ENCODE measurements at regions of chr20 and their contacts with region 1.

Region 1: DNA sequence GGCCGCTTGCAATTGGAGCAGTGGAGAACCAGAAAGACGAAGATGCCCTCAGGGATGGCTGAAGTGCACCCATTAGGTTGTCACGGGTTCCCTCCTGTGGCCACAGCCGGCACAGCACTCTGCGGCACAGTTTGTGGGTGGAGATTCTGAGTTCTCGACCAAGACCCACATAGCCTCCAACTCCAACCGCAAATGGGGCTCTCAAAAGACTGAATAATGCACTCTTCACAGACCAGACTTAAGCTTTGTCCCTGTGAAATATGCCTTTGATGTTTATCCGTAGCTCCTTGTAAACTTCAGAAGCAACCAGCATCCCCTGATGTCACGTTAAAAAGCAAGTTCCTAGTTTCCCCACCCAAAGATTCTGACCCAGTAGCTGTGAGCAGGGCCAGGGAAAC is 934 bp upstream of the CST9 start:
- DNase-seq: peak; percentile 12
- H3K4me3 ChIP-seq: no peak overlapping the region
- CTCF ChIP-seq: peak; percentile 97

Region 2: GRCh38 chr20:23350196-23350903 is 256.3 kb before region 1 on chr20 and contains the start of gene NXT1:
- CTCF ChIA-PET with region 1: interaction called, 23 read pairs
- POLR2A ChIA-PET with region 1: no interaction called
- DNase-seq: peak; percentile 95
- H3K4me3 ChIP-seq: peak within 1 kb of the TSS; percentile 86
- CTCF ChIP-seq: peak; percentile 4

Measured in AG04449 (cell line).